ENCODE measurements at regions of chr2 and their contacts with region 1.

Region 1: GRCh38 chr2:100262555-100263320 is 59.6 kb downstream of the LONRF2 start:
- DNase-seq: peak; percentile 72
- H3K4me3 Mint-ChIP-seq: no peak overlapping the region
- H3K27ac Mint-ChIP-seq: no peak overlapping the region
- H3K4me1 Mint-ChIP-seq: no peaks in the 10 kb centered on the region
- H3K27me3 Mint-ChIP-seq: no peaks in the 10 kb centered on the region

Region 2: GRCh38 chr2:100272841-100273329 is 10.1 kb after region 1 on chr2:
- CTCF ChIA-PET with region 1: interaction called, 25 read pairs
- POLR2A ChIA-PET with region 1: no interaction called
- intact Hi-C with region 1: no loop called
- DNase-seq: no peak
- H3K4me3 Mint-ChIP-seq: no peak overlapping the region
- H3K27ac Mint-ChIP-seq: no peak overlapping the region
- H3K4me1 Mint-ChIP-seq: no peaks in the 10 kb centered on the region
- H3K27me3 Mint-ChIP-seq: no peaks in the 10 kb centered on the region

Region 3: GRCh38 chr2:100291120-100291970 is 28.6 kb after region 1 on chr2:
- CTCF ChIA-PET with region 1: interaction called, 16 read pairs
- POLR2A ChIA-PET with region 1: no interaction called
- intact Hi-C with region 1: no loop called
- DNase-seq: peak; percentile 72
- H3K4me3 Mint-ChIP-seq: no peak overlapping the region
- H3K27ac Mint-ChIP-seq: no peak overlapping the region
- H3K4me1 Mint-ChIP-seq: no peaks in the 10 kb centered on the region
- H3K27me3 Mint-ChIP-seq: peaks cover 7% of the 10 kb centered on the region

Region 4: DNA sequence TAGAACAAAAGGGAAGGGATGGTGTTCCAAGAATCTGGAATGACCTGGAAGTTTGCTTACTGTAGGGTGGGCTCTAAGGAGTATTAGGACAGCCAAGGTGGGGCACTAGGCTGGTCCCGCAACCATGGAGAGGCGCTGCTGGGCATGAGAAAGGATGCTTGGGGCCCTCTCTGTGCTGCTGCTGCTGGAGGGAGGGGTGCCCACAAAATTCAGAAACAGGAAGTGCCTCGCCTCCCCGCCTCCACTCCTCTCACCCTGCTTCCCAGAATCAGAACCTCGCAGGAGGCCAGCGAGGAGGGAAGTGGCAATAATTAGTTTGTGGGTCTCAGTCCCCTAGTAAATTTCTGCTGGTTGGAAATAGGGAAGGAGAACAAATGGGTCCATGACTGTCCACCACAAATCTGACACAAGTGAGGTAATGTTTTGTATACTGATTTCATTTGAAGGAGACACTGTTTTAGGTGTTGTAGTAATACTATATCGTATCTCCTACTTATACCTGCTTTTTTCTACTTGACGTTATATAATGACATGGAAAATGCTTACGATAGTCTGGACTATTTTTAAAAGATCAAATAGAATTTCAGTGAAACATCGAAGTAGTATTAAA is 292.2 kb after region 1 on chr2:
- CTCF ChIA-PET with region 1: no interaction called
- POLR2A ChIA-PET with region 1: no interaction called
- intact Hi-C with region 1: no loop called
- DNase-seq: peak; percentile 75
- H3K4me3 Mint-ChIP-seq: peak overlapping the region; percentile 61
- H3K27ac Mint-ChIP-seq: peak overlapping the region; percentile 81
- H3K4me1 Mint-ChIP-seq: peaks cover 18% of the 10 kb centered on the region
- H3K27me3 Mint-ChIP-seq: no peaks in the 10 kb centered on the region